Activated CD4-positive, alpha-beta T cell treated with anti-CD3 and anti-CD28 coated beads for 36 hours (primary cell): ENCODE measurements at regions of chr1 and their contacts with region 1.

Region 1: GRCh38 chr1:93345633-93346420 is at the start of gene DR1:
- DNase-seq: peak; percentile 96
- ATAC-seq: peak; percentile 78
- H3K4me3 Mint-ChIP-seq: peak within 1 kb of the TSS; percentile 97
- H3K27ac Mint-ChIP-seq: peak within 1 kb of the TSS; percentile 97
- H3K4me1 Mint-ChIP-seq: peaks cover 22% of the 10 kb centered on the region
- H3K27me3 Mint-ChIP-seq: no peaks in the 10 kb centered on the region
- total RNA-seq, gene DR1: 84.8 to 95.3 TPM

Region 2: DNA sequence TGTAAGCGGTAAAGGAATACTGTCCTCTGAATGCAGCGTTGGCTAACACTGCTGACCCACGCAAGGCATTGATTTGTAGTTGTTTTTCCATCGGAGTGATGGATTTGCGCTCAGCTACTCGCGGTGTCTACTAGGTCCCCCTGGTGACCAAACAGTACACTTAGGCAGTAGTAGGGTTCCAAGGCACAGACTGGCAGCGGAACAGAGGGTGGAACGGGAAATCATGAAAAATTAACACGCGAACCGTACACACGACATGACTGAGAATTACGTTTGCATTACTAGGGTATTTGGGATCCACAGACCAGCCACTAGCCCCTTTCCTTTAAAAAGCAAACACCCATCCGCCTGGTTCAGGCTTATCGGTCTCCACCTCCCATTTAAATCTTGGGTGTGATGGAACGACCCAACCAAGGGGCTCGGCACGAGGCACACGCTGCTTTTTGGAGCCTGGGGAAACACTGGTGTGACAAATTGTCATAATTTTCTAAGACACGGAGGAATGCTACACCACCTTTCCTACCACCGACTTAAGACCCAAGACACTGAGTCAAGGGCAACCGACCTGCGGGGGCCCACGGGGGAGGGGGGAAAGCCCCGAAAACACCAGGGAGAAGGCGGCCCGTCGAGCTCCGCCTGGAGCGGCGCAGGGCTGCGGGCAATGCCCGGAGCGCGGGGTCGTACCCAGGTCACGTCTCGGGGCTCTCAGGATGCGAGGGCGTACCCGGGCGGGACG is 385.3 kb before region 1 on chr1:
- CTCF ChIA-PET with region 1: no interaction called
- POLR2A ChIA-PET with region 1: no interaction called
- intact Hi-C with region 1: loop called (anchors 1 to 5 kb)
- DNase-seq: peak; percentile 78
- ATAC-seq: peak; percentile 62
- H3K4me3 Mint-ChIP-seq: peak overlapping the region; percentile 94
- H3K27ac Mint-ChIP-seq: peak overlapping the region; percentile 95
- H3K4me1 Mint-ChIP-seq: peaks cover 36% of the 10 kb centered on the region
- H3K27me3 Mint-ChIP-seq: no peaks in the 10 kb centered on the region

Region 3: DNA sequence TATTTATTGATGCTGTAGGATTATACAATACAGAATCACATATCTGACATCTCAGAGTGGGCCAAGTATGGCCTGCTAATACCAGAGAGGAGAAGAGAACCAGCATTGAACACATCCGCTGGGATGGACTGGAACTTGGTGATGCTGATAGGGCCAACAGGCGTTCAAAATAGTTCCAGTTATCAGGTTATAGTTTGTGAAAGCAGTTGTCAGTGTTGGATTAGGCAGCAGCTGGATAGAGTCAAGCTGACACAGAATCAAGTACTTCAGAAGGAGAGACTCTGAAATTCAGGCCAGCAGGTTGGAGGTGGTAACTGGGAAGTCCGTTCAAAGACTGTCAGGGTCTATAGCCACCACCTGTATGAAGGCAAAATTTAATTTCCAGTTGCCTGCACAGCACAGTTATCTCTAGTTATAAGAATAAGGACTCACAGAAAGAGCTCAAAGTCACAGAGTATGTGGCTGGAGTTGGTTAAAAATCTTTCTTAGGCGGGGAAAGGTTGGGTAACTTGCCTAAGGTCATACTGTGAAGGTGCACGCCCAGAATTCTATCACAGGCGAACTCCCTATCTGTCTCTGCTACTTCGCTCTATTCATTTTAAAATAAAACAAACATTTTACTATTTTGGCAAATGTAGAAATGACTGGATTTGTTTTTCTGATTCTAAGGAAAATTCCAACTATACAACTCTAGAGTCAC is 374.7 kb before region 1 on chr1:
- CTCF ChIA-PET with region 1: no interaction called
- POLR2A ChIA-PET with region 1: no interaction called
- intact Hi-C with region 1: no loop called
- DNase-seq: no peak
- ATAC-seq: no peak
- H3K4me3 Mint-ChIP-seq: no peak overlapping the region
- H3K27ac Mint-ChIP-seq: no peak overlapping the region
- H3K4me1 Mint-ChIP-seq: peaks cover 49% of the 10 kb centered on the region
- H3K27me3 Mint-ChIP-seq: no peaks in the 10 kb centered on the region

Region 4: GRCh38 chr1:93129507-93130099 is 216.2 kb before region 1 on chr1:
- CTCF ChIA-PET with region 1: no interaction called
- POLR2A ChIA-PET with region 1: interaction called, 10 read pairs
- intact Hi-C with region 1: no loop called
- DNase-seq: no peak
- ATAC-seq: no peak
- H3K4me3 Mint-ChIP-seq: no peak overlapping the region
- H3K27ac Mint-ChIP-seq: no peak overlapping the region
- H3K4me1 Mint-ChIP-seq: peaks cover 2% of the 10 kb centered on the region
- H3K27me3 Mint-ChIP-seq: no peaks in the 10 kb centered on the region

Region 5: GRCh38 chr1:93447516-93448291 is 101.9 kb after region 1 on chr1 and contains the start of gene FNBP1L:
- CTCF ChIA-PET with region 1: no interaction called
- POLR2A ChIA-PET with region 1: no interaction called
- intact Hi-C with region 1: loop called in 1 of 2 experiments (anchors 5 kb)
- DNase-seq: peak; percentile 81
- ATAC-seq: peak; percentile 87
- H3K4me3 Mint-ChIP-seq: peak within 1 kb of the TSS; percentile 83
- H3K27ac Mint-ChIP-seq: peak within 1 kb of the TSS; percentile 72
- H3K4me1 Mint-ChIP-seq: peaks cover 15% of the 10 kb centered on the region
- H3K27me3 Mint-ChIP-seq: peaks cover 24% of the 10 kb centered on the region
- total RNA-seq, gene FNBP1L: 1.2 to 1.4 TPM

Region 6: DNA sequence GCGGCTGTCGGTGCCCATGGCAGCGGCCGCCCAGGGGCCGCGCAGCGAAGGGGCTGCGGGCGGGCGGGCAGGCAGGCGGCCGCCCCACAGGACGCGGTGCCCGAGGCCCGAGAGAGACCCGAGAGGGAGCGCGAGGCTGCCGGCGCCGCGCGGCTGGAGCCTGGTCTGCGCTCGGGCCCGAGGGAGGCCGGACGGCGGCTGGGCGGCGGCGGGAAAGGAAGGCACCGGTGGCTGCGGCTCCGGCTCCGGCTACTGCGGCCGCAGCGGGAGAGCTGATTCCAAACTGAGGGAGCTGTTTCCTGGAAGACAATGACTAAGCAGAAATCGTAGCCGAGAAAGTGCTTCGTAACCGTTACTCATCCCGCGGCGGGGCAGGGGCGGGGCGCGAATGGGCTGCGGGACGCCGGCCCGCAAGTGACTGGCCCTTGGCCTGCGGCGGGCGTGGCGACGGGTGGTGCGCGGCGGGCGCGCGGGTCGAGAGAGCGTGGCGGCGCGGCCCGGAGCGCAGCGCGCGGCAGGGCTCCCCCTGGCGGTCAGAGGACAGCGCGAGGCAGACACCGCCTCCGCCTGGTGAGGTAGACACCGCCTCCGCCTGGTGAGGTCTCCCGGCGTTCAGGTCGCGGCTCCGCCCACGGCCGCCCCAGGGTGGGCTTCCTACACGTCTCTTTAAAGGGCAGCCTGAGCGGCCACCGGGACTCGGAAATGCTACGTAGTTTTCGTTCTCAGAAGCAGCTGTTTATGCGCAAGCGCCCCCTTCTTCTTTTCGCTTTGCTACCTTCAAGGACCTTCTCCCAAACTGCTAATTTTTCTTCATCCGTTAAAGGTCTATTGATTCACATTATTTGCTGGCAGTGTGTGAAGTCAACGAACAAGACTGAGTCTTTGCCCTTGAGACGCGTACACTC is 563.6 kb after region 1 on chr1 and contains the start of gene GCLM:
- CTCF ChIA-PET with region 1: no interaction called
- POLR2A ChIA-PET with region 1: no interaction called
- intact Hi-C with region 1: loop called in 1 of 2 experiments (anchors 2 kb)
- DNase-seq: peak; percentile 93
- ATAC-seq: peak; percentile 84
- H3K4me3 Mint-ChIP-seq: peak within 1 kb of the TSS; percentile 96
- H3K27ac Mint-ChIP-seq: peak within 1 kb of the TSS; percentile 97
- H3K4me1 Mint-ChIP-seq: peaks cover 34% of the 10 kb centered on the region
- H3K27me3 Mint-ChIP-seq: peaks cover 5% of the 10 kb centered on the region
- total RNA-seq, gene GCLM: 12.8 to 19.2 TPM